PC-9 (cell line): ENCODE measurements at regions of chr10 and their contacts with region 1.

Region 1: DNA sequence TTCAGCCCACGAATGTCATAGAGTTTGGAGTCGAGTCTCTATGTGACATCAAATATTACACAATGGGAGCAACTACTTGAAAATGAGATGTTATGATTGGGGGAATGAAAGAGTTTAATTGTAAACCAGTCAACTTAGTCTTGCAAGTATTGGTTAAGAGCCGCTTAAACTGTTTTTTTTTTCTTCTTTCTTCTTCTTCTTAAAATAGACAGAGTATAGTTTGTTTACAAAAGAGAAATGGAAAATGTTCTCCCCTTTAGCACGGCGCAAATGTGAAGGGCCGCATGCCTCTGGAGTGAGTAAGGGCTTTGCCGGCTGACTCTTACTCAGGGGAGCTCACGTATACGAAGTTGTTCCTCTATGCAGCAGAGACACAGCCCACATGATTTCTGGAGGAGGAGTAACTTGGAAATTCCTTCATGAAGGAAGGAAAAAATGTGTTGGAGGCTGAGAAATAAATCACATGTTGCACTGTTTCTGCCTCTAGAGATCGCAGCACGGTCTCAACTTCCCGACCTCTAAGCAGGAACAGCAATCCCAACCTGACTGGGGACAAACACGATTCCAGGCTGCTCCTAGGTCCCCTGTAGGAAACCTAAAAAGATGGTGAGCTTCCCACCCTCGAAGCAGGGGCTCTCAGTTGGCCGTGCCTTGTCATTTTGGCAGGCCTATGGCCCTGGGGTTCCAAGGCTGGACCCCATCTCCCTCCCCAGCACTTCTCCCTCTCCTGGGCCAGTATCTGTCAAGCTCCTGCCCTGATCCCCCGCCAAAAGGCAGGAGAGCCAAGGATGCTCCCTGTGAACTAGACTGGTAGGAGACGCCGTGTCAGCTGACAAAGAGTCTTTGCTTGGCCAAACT is 44.8 kb downstream of the MYOF start:
- DNase-seq: peak; percentile 74 to 95
- H3K4me3 ChIP-seq: peak overlapping the region; percentile 37; the same call in 1 of the 2 replicates
- H3K27ac ChIP-seq: peak overlapping the region; percentile 99
- H3K4me1 ChIP-seq: peaks cover 75% of the 10 kb centered on the region
- H3K27me3 ChIP-seq: no peaks in the 10 kb centered on the region
- CTCF ChIP-seq: no peak

Region 2: GRCh38 chr10:93288654-93289634 is 148.4 kb before region 1 on chr10:
- CTCF ChIA-PET with region 1: no interaction called
- POLR2A ChIA-PET with region 1: no interaction called
- intact Hi-C with region 1: no loop called
- DNase-seq: peak; percentile 77 to 84
- H3K4me3 ChIP-seq: no peak overlapping the region
- H3K27ac ChIP-seq: peak overlapping the region; percentile 66
- H3K4me1 ChIP-seq: peaks cover 5% of the 10 kb centered on the region
- H3K27me3 ChIP-seq: no peaks in the 10 kb centered on the region
- CTCF ChIP-seq: peak; percentile 76

Region 3: GRCh38 chr10:93376372-93377293 is 60.7 kb before region 1 on chr10:
- CTCF ChIA-PET with region 1: no interaction called
- POLR2A ChIA-PET with region 1: interaction called, 3 read pairs
- intact Hi-C with region 1: loop called (anchors 2 kb)
- DNase-seq: peak; percentile 59 to 76
- H3K4me3 ChIP-seq: peak overlapping the region; percentile 35; the same call in 1 of the 2 replicates
- H3K27ac ChIP-seq: peak overlapping the region; percentile 90
- H3K4me1 ChIP-seq: peaks cover 21% of the 10 kb centered on the region
- H3K27me3 ChIP-seq: no peaks in the 10 kb centered on the region
- CTCF ChIP-seq: peak; percentile 89

Region 4: GRCh38 chr10:93383997-93384396 is 53.3 kb before region 1 on chr10:
- CTCF ChIA-PET with region 1: no interaction called
- POLR2A ChIA-PET with region 1: interaction called, 7 read pairs
- intact Hi-C with region 1: loop called (anchors 1 kb)
- DNase-seq: peak; percentile 85 to 95
- H3K4me3 ChIP-seq: peak overlapping the region; percentile 49; the same call in 1 of the 2 replicates
- H3K27ac ChIP-seq: peak overlapping the region; percentile 98
- H3K4me1 ChIP-seq: peaks cover 23% of the 10 kb centered on the region
- H3K27me3 ChIP-seq: no peaks in the 10 kb centered on the region
- CTCF ChIP-seq: no peak

Region 5: DNA sequence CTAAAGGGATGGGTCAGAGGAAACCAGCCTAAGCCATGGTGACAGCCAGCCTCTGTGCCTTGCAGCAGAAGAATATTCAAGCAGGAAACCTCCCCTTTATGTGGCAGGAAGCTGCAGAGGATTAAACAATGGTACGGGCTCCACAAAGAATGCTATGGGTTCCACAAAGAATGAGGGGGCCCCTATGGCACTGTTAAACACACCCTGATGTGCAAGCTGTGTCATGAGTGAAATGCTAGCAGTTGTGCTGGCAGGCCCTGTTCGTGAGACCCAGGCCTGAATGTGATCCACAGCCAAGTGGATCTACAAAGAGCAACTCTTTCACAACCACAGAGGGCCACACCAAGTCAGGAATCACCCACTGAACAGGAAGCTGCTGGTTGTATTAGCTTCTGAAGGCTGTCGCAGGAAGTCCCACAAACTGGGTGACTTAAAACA is 24.0 kb before region 1 on chr10:
- CTCF ChIA-PET with region 1: no interaction called
- POLR2A ChIA-PET with region 1: no interaction called
- intact Hi-C with region 1: no loop called
- DNase-seq: no peak
- H3K4me3 ChIP-seq: no peak overlapping the region
- H3K27ac ChIP-seq: no peak overlapping the region
- H3K4me1 ChIP-seq: peaks cover 8% of the 10 kb centered on the region
- H3K27me3 ChIP-seq: no peaks in the 10 kb centered on the region
- CTCF ChIP-seq: no peak

Region 6: DNA sequence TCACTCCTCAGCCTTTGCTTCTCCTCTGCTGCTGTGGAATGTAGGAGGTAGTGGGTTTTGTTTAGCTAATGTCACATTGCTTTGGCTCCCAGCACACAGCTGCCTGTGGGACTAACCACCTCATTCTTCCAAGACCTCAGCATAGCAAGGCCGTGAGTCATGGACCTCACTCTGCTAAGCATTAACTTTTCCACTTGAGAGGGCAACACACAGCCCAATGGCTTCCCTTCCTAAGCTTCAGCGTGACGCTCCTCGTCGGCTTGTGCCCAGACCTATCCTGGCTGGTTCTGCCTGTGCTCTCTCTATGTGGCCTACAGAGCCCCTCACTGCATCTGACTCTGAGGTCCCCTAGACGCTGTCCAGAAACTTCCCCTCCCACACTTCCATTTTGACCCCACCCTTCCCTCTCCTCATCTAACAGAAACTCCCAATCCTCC is 21.5 kb after region 1 on chr10:
- CTCF ChIA-PET with region 1: no interaction called
- POLR2A ChIA-PET with region 1: interaction called, 30 read pairs
- intact Hi-C with region 1: loop called (anchors 2 kb)
- DNase-seq: peak; percentile 86 to 91
- H3K4me3 ChIP-seq: no peak overlapping the region
- H3K27ac ChIP-seq: peak overlapping the region; percentile 90
- H3K4me1 ChIP-seq: peaks cover 14% of the 10 kb centered on the region
- H3K27me3 ChIP-seq: no peaks in the 10 kb centered on the region
- CTCF ChIP-seq: no peak

Region 7: GRCh38 chr10:93471110-93471651 is 33.9 kb after region 1 on chr10:
- CTCF ChIA-PET with region 1: interaction called, 4 read pairs
- POLR2A ChIA-PET with region 1: interaction called, 7 read pairs
- intact Hi-C with region 1: loop called (anchors 1 kb)
- DNase-seq: peak in 1 of 2 experiments; percentile 81
- H3K4me3 ChIP-seq: 0 out of 2 replicates have a peak overlapping the region, but pooled peaks have one; percentile 8
- H3K27ac ChIP-seq: peak overlapping the region; percentile 97
- H3K4me1 ChIP-seq: peaks cover 70% of the 10 kb centered on the region
- H3K27me3 ChIP-seq: no peaks in the 10 kb centered on the region
- CTCF ChIP-seq: no peak

Region 8: GRCh38 chr10:93515071-93516005 is 78.0 kb after region 1 on chr10:
- CTCF ChIA-PET with region 1: interaction called, 11 read pairs
- POLR2A ChIA-PET with region 1: no interaction called
- intact Hi-C with region 1: no loop called
- DNase-seq: no peak
- H3K4me3 ChIP-seq: no peak overlapping the region
- H3K27ac ChIP-seq: no peak overlapping the region
- H3K4me1 ChIP-seq: no peaks in the 10 kb centered on the region
- H3K27me3 ChIP-seq: no peaks in the 10 kb centered on the region
- CTCF ChIP-seq: no peak

Region 9: GRCh38 chr10:93838278-93838677 is 401.0 kb after region 1 on chr10:
- CTCF ChIA-PET with region 1: no interaction called
- POLR2A ChIA-PET with region 1: no interaction called
- intact Hi-C with region 1: no loop called
- DNase-seq: no peak
- H3K4me3 ChIP-seq: no peak overlapping the region
- H3K27ac ChIP-seq: no peak overlapping the region
- H3K4me1 ChIP-seq: no peaks in the 10 kb centered on the region
- H3K27me3 ChIP-seq: no peaks in the 10 kb centered on the region
- CTCF ChIP-seq: no peak

Region 10: DNA sequence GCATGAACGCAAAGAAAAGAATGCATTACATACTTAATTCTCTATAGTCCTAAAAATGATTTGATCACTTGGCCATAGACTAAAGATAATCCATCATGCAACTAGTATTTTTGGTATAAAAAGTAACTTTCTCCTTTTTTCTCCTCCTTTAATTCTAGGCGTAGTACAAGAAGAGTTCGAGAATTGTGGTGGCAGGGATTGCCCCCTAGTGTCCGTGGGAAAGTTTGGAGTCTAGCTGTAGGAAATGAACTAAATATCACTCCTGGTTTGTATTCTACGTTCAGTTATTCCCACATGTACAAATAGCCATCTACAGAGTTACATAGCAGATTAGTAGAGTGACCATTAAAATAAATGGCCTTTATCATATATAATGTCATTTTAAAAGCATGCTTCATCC is 1062.7 kb after region 1 on chr10:
- CTCF ChIA-PET with region 1: no interaction called
- POLR2A ChIA-PET with region 1: interaction called, 13 read pairs
- intact Hi-C with region 1: no loop called
- DNase-seq: no peak
- H3K4me3 ChIP-seq: no peak overlapping the region
- H3K27ac ChIP-seq: no peak overlapping the region
- H3K4me1 ChIP-seq: no peaks in the 10 kb centered on the region
- H3K27me3 ChIP-seq: no peaks in the 10 kb centered on the region
- CTCF ChIP-seq: peak; percentile 33; the same call in 1 of the 2 replicates